PC-9 (cell line): ENCODE measurements at regions of chr5 and their contacts with region 1.

Region 1: DNA sequence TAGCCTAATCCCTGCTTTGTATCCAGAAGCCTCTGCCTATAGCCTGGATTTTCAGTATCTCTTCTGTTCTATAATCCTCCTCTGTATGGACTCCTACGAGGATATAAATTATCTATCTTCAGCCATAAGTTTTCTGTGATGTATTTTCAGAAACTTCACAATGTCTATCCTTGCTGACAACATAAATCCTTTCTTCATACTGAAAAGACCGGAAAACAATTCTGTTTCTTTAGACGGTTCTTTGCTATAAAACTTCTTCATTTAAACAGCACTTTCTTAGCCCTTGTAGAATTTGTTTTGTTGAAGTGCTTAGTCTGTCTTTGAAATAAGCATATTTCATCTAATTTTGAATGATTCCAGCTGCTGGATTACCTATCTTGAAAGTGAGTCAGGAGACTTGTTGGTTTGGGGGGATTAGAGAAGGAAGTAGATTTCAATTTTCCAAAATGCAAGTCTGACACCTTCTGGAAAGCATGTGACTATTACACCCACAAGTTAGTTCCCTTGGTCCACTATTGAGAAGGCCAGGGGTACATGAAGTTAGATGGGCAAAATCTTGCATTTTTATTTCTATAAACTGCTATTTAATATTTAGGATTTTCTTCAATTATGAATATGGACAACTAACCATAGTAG is 96.3 kb upstream of the RANBP3L start:
- DNase-seq: no peak
- H3K4me3 ChIP-seq: no peak overlapping the region
- H3K27ac ChIP-seq: no peak overlapping the region
- H3K4me1 ChIP-seq: no peaks in the 10 kb centered on the region
- H3K27me3 ChIP-seq: no peaks in the 10 kb centered on the region
- CTCF ChIP-seq: peak; percentile 62; the same call in 1 of the 2 replicates

Region 2: DNA sequence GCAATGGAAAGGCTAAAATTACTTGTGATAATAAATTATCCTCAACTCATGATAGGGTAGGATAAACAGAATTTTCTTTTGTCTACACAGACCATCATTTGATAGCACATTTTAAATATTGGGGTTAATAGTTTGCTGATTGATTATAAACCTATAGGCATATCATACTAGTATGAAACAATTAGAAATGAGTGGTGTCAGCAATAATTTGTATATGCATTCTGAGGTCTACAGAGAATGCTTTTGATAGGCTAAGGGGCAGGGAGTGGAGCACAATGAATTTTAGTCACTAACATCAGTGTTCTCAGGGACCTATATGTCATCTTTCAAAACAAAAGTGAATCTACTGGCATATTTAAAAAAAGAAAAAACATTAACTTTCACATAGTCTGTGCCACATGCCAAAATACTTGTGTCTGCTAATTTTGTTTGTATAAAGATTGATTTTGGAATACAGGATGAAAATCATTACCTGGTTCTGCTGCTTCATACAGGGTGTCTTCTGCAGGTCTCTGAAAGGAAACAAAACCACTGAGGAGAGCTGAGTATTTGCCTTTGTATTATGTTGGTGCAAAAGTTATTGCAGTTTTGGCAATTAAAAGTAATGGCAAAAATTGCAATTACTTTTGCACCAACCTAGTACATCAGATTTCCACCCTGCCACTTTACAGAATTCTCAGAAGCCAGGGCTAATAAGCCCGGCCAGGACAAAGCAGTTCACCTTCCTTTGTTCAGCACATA is 128.4 kb before region 1 on chr5:
- CTCF ChIA-PET with region 1: no interaction called
- POLR2A ChIA-PET with region 1: no interaction called
- intact Hi-C with region 1: loop called (anchors 5 kb)
- DNase-seq: no peak
- H3K4me3 ChIP-seq: no peak overlapping the region
- H3K27ac ChIP-seq: no peak overlapping the region
- H3K4me1 ChIP-seq: no peaks in the 10 kb centered on the region
- H3K27me3 ChIP-seq: no peaks in the 10 kb centered on the region
- CTCF ChIP-seq: no peak